Upper lobe of right lung (tissue), 1 donor: ENCODE measurements at regions of chr6 and their contacts with region 1.

Region 1: DNA sequence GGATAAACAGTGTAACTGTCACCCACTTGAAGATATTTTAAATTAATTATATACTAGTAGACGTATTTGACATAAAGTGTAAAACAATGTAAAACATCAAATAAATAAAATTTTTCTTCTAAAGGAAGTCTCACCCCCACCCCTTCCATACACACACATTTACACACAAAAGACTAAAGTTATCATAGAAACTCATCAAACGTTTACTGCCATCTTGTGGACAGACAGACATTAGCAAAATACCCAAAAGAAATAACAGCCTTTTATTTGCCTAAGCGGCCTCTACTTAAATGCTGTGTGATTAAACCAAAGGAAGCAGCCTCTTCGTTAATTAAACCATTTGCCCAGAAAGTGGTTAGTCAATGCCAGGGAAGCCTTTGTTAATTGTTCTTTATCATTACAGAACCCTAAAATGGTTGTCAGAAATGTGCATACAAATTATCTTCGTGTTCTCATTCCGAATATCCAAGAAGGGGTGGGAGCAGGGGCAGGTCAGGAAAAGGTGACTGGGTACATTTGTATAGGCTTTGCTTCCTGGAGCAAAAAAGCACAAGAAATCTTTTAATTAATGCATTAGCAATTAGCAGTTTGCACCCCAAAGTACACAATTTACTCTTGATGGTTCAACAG is 176.2 kb upstream of the SASH1 start:
- DNase-seq: no peak
- ATAC-seq: peak; percentile 77
- H3K4me3 ChIP-seq: no peak overlapping the region
- H3K27ac ChIP-seq: no peak overlapping the region
- H3K4me1 ChIP-seq: no peaks in the 10 kb centered on the region
- H3K27me3 ChIP-seq: no peaks in the 10 kb centered on the region
- CTCF ChIP-seq: peak; percentile 73

Region 2: GRCh38 chr6:147506704-147507114 is 659.7 kb before region 1 on chr6:
- intact Hi-C with region 1: loop called (anchors 5 kb)
- DNase-seq: peak; percentile 87
- ATAC-seq: peak; percentile 75
- H3K4me3 ChIP-seq: peak overlapping the region; percentile 75
- H3K27ac ChIP-seq: no peak overlapping the region
- H3K4me1 ChIP-seq: peaks cover 19% of the 10 kb centered on the region
- H3K27me3 ChIP-seq: peaks cover 14% of the 10 kb centered on the region
- CTCF ChIP-seq: peak; percentile 79

Region 3: GRCh38 chr6:147879111-147879510 is 287.3 kb before region 1 on chr6:
- intact Hi-C with region 1: no loop called
- DNase-seq: no peak
- ATAC-seq: no peak
- H3K4me3 ChIP-seq: no peak overlapping the region
- H3K27ac ChIP-seq: no peak overlapping the region
- H3K4me1 ChIP-seq: no peaks in the 10 kb centered on the region
- H3K27me3 ChIP-seq: no peaks in the 10 kb centered on the region
- CTCF ChIP-seq: no peak

Region 4: DNA sequence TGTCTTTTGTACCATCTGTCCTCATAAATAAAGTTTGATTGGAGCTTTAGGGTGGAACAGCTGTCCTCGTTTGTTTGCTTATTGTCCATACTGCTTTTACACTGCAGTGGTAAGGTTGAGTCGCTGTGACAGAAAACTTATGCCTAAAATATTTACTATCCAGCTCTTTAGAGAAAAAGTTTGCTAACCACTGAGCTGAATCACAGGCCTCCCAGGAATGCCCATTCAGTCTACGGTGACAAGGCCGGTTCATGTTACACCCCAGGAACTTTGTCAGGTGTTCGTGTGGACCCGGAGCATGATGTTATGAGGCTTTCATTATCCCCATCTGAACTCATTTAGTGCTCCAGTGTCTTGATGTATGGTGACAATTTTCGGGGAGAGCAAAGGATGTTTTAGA is 256.8 kb before region 1 on chr6:
- intact Hi-C with region 1: no loop called
- DNase-seq: no peak
- ATAC-seq: no peak
- H3K4me3 ChIP-seq: no peak overlapping the region
- H3K27ac ChIP-seq: no peak overlapping the region
- H3K4me1 ChIP-seq: no peaks in the 10 kb centered on the region
- H3K27me3 ChIP-seq: no peaks in the 10 kb centered on the region
- CTCF ChIP-seq: no peak

Region 5: GRCh38 chr6:148250975-148251685 is 84.7 kb after region 1 on chr6:
- intact Hi-C with region 1: loop called (anchors 5 kb)
- DNase-seq: no peak
- ATAC-seq: peak; percentile 81
- H3K4me3 ChIP-seq: no peak overlapping the region
- H3K27ac ChIP-seq: no peak overlapping the region
- H3K4me1 ChIP-seq: no peaks in the 10 kb centered on the region
- H3K27me3 ChIP-seq: no peaks in the 10 kb centered on the region
- CTCF ChIP-seq: peak; percentile 50